ENCODE measurements at regions of chr22 and their contacts with region 1.

Region 1: DNA sequence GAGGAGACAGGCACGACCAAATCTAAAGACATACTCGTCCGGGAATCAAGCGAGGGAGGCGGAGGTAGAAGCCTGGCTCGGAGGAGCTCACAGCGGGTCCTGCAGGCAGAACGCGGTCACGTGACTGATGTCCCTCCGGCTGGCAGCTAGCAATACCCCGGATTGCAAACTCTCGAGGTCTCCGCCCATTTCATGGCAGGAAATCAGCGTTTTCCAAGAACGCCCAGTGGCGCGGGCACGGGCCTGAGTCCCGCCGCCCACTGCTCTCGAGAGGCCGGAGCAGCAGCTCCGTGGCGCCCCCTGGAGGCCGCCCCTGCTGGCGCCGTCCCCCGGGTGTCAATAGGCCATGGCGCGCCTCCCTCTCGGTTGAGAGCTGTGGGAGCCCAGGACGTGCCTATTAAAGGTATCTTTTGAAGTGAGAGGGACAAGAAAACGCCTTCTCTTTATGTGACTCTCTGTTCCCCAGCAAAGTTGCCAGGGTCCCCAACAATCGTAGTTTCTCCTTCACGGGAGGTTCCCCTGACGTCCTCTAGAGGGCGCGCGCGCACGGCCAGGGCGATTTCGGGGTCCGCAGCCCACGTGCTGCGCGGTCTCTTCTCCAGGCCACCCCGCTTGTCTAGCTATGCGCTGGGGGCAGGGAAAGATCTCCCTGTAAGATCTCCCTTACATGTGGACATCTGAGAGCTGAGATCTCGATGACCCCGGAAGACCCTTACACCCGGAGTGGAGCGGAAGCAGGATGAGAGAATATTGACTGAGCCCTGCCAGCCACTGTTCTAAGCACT is 37.3 kb upstream of the RBFOX2 start:
- DNase-seq: peak; percentile 88 to 93
- H3K4me3 ChIP-seq: peak overlapping the region; percentile 36 to 60 (median 40)
- H3K27ac ChIP-seq: peak overlapping the region; percentile 38; the same call in 1 of the 2 replicates
- H3K4me1 ChIP-seq: peaks cover 0 to 5% (median 3%) of the 10 kb centered on the region in 4 experiments; a peak in 4 of 7 replicates
- H3K27me3 ChIP-seq: peaks cover 0 to 4% (median 0%) of the 10 kb centered on the region in 4 experiments; a peak in 1 of 7 replicates
- CTCF ChIP-seq: peak; percentile 78 to 88 (median 85)
- EP300 ChIP-seq: no peak
- POLR2A ChIP-seq: peak in 1 of 2 experiments; percentile 86; a peak in 2 of 3 replicates
- RAD21 ChIP-seq: peak; percentile 50 to 67

Region 2: GRCh38 chr22:35749808-35750207 is 316.2 kb before region 1 on chr22:
- CTCF ChIA-PET with region 1: interaction called, 11 read pairs
- POLR2A ChIA-PET with region 1: interaction called, 3 read pairs
- DNase-seq: no peak
- H3K4me3 ChIP-seq: no peak overlapping the region
- H3K27ac ChIP-seq: no peak overlapping the region
- H3K4me1 ChIP-seq: peaks cover 2 to 23% (median 17%) of the 10 kb centered on the region in 4 experiments; a peak in 5 of 7 replicates
- H3K27me3 ChIP-seq: no peaks in the 10 kb centered on the region
- CTCF ChIP-seq: no peak
- EP300 ChIP-seq: no peak
- POLR2A ChIP-seq: no peak
- RAD21 ChIP-seq: no peak

Region 3: DNA sequence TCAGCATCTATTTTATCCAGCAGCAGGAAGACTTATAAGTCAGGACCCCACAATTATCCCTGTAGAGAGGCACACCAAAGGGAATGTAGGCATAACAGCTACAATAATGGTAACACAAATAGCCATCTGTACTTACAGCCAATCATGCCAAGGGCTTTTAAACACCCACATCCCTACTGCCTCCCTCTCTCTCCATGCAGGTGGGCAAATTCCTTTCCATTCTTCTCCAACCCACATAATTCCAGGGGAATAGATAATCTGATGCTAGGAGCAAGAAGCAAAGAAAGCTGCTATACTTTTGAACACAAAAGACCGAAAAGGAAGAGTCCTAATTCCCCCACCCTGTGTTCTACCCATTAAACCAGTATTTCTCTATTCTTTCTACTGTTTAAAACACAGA is 84.1 kb before region 1 on chr22:
- CTCF ChIA-PET with region 1: interaction called, 10 read pairs
- POLR2A ChIA-PET with region 1: no interaction called
- DNase-seq: no peak
- H3K4me3 ChIP-seq: no peak overlapping the region
- H3K27ac ChIP-seq: no peak overlapping the region
- H3K4me1 ChIP-seq: peaks cover 0 to 12% (median 2%) of the 10 kb centered on the region in 4 experiments; a peak in 5 of 7 replicates
- H3K27me3 ChIP-seq: no peaks in the 10 kb centered on the region
- CTCF ChIP-seq: no peak
- EP300 ChIP-seq: no peak
- POLR2A ChIP-seq: no peak
- RAD21 ChIP-seq: no peak

Region 4: DNA sequence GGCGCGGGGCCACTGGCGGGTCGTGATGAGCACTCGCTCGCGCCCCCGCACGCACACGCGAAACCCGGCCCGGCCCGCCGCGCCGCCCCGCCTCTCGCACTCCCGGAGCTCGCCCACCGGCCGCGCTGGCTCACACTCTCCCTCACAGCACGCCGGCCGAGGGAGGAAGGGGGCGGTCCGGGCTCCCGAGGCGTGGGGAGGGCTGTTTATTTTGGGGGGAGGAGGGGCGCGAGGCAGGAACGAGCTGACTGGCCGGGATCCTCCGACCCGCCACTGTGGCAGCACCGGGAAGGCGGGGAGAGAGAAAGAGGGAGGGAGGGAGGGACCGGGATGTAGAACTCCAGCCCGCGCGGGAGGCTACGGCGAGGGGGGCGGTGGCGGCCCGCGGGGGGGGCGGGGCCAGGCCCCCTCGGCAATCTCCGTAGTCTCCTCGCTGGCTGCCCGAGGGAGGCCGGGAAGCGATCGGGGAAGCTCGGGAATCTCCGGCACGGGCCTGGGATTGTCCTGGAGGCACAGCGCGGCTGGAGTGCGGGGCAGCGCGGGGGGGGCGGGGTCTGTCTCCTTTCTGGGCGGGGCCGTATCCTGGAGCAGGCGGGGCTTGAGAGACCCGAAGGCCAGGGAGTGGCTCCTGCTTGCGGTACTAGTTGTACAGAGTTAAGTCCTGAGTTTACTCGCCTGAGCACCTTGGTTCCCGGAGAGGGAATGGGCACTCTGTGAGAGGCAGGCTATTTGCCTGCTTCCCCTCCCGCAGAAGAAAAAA is 37.1 kb before region 1 on chr22 and contains the start of gene RBFOX2:
- CTCF ChIA-PET with region 1: interaction called, 47 read pairs
- POLR2A ChIA-PET with region 1: interaction called, 8 read pairs
- DNase-seq: peak; percentile 84 to 99
- H3K4me3 ChIP-seq: peak within 1 kb of the TSS; percentile 87 to 95 (median 92)
- H3K27ac ChIP-seq: peak within 1 kb of the TSS; percentile 88; the same call in 1 of the 2 replicates
- H3K4me1 ChIP-seq: peaks cover 0 to 9% (median 6%) of the 10 kb centered on the region in 4 experiments; a peak in 5 of 7 replicates
- H3K27me3 ChIP-seq: no peaks in the 10 kb centered on the region
- CTCF ChIP-seq: no peak
- EP300 ChIP-seq: no peak
- POLR2A ChIP-seq: no peak
- RAD21 ChIP-seq: no peak
- total RNA-seq, gene RBFOX2: 108 and 121 TPM in 2 replicates

Region 5: DNA sequence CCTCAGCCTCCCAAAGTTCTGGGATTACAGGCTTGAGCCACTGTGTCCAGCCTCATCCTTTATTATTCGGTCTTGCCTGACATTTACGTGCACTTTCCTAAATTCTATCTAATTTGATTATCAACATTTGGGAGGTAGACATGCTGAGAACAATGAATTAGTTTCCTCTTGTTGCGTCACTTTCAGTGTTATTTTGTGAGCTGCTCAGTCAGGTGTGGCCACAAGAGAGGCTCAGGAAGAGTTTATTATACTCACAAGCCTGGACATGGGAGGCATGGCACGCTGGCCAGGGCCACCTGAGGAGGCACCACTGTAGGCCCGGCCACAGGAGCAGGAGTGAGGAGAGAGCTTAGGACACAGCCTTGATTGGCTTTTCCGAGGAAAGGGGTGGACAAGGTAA is 22.3 kb after region 1 on chr22:
- CTCF ChIA-PET with region 1: interaction called, 37 read pairs
- POLR2A ChIA-PET with region 1: interaction called, 4 read pairs
- DNase-seq: no peak
- H3K4me3 ChIP-seq: no peak overlapping the region
- H3K27ac ChIP-seq: no peak overlapping the region
- H3K4me1 ChIP-seq: peaks cover 0 to 4% (median 0%) of the 10 kb centered on the region in 4 experiments; a peak in 3 of 7 replicates
- H3K27me3 ChIP-seq: no peaks in the 10 kb centered on the region
- CTCF ChIP-seq: no peak
- EP300 ChIP-seq: no peak
- POLR2A ChIP-seq: no peak
- RAD21 ChIP-seq: no peak

Region 6: DNA sequence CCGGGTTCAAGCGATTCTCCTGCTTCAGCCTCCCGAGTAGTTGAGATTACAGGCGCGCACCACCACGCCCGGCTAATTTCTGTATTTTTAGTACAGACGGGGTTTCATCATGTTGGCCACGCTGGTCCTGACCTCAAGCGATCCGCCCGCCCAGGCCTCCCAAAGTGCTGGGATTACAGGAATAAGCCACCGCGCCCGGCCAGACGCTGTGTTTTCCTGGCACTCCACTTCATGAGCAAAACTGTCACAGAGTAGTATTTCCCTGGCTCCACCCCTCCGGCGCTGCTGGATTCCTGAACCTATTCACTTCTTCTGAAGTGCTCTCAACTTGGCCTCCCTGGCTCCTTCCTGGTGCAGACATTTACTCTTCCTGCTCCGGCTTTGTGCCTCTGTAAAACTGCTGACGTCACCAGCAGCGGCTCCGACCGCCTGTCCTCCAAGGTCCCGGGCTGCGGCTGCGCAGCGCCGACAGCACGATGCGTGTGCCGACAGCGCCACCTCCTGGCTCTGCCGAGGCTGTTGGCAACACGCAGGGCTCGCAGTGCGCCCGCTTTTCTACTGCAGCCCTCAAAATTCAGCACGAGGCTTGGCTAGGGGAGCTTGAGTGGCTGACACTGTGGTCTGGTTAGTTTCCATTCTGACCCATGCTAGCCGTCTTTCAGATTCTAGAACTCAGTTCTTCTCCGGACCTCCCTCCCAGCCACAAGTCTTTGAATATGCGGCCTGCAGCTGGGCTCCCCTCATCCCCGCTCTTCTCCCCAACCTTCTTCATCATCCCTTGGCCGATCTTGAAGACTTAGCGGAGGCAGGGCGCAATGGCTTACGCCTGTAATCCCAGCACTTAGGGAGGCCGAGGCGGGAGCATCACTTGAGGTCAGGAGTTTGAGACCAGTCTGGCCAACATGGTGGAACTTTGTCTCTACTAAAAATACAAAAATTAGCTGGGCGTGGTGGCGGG is 58.0 kb after region 1 on chr22:
- CTCF ChIA-PET with region 1: interaction called, 16 read pairs
- POLR2A ChIA-PET with region 1: no interaction called
- DNase-seq: peak; percentile 87 to 93
- H3K4me3 ChIP-seq: no peak overlapping the region; a peak in 1 of 8 replicates
- H3K27ac ChIP-seq: no peak overlapping the region
- H3K4me1 ChIP-seq: peaks cover 0 to 2% (median 0%) of the 10 kb centered on the region in 4 experiments; a peak in 1 of 7 replicates
- H3K27me3 ChIP-seq: peaks cover 0 to 6% (median 2%) of the 10 kb centered on the region in 4 experiments; a peak in 2 of 7 replicates
- CTCF ChIP-seq: peak; percentile 97 to 98 (median 98)
- EP300 ChIP-seq: no peak
- POLR2A ChIP-seq: no peak
- RAD21 ChIP-seq: peak; percentile 100